ENCODE measurements at regions of chr21 and their contacts with region 1.

Region 1: DNA sequence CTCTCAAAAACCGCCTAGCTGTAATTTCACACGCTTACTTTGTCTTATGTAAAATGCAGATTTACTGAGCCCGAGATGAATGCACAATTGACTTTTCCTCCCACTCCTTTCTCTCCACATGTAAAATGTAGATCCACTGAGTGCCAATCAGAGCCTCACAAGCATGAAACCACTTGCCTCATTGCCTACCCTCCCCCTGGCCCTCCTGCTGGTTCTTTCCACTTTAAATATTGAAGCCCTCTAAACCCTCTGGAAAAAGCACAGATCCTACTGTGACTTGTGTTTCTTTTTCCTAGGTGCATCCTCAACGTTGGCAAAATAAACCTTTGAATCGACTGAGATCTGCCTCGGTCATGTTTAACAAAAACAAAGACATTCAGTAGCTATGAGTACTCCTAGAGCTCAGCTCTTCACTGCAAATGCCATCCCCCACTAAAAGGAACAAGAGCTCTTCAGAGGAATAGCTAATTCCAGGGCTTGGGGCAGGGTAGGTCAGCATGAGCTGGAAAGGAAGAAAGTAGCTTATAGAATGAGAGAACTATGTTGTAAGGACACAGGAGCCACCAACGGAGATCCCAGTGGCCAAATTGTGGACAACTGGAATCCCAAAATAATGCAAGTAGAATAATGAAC is 365.5 kb upstream of the RUNX1 start:
- DNase-seq: no peak
- ATAC-seq: no peak
- H3K4me3 ChIP-seq: no peak overlapping the region
- H3K4me3 Mint-ChIP-seq: no peak overlapping the region
- H3K27ac ChIP-seq: no peak overlapping the region
- H3K27ac Mint-ChIP-seq: no peak overlapping the region
- H3K4me1 ChIP-seq: no peaks in the 10 kb centered on the region
- H3K4me1 Mint-ChIP-seq: no peaks in the 10 kb centered on the region
- H3K27me3 ChIP-seq: no peaks in the 10 kb centered on the region
- H3K27me3 Mint-ChIP-seq: peaks cover 6% of the 10 kb centered on the region
- CTCF ChIP-seq: no peak

Region 2: DNA sequence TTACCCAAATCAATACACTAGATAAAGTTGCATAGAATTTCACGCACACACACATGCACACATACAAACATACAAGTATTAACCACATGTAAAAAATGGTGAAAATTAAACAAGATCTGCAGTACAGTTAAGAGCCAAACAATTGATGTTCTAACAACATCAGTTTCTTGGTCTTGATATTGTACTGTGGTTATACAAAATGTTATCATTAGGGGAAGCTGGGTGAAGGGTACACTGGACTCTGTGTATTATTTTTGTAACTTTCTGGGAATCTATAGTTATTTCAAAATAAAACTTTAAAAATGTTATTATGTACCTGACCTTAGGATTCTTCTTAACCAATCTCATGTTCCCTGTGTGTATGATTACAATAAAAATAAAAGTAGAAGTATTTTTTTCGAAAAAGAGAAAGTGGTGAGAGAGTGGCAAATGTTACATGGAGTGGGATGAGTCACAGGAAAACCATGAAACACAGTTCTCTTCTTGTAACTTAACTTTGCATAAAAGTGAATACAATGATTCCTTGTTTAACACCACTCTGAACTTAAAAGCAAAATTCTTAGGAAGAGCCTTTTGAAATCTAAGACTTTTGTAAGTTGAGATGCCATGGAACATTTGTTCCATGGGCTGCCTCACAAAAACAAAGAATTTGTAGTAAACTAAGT is 263.9 kb before region 1 on chr21:
- CTCF ChIA-PET with region 1: no interaction called
- POLR2A ChIA-PET with region 1: no interaction called
- intact Hi-C with region 1: no loop called
- DNase-seq: no peak
- ATAC-seq: no peak
- H3K4me3 ChIP-seq: no peak overlapping the region
- H3K4me3 Mint-ChIP-seq: no peak overlapping the region
- H3K27ac ChIP-seq: no peak overlapping the region
- H3K27ac Mint-ChIP-seq: no peak overlapping the region
- H3K4me1 ChIP-seq: peaks cover 3% of the 10 kb centered on the region
- H3K4me1 Mint-ChIP-seq: peaks cover 9% of the 10 kb centered on the region
- H3K27me3 ChIP-seq: no peaks in the 10 kb centered on the region
- H3K27me3 Mint-ChIP-seq: peaks cover 2% of the 10 kb centered on the region
- CTCF ChIP-seq: no peak

Region 3: GRCh38 chr21:35833991-35834390 is 419.4 kb after region 1 on chr21:
- CTCF ChIA-PET with region 1: no interaction called
- POLR2A ChIA-PET with region 1: no interaction called
- intact Hi-C with region 1: loop called in 1 of 2 experiments (anchors 10 kb)
- DNase-seq: no peak
- ATAC-seq: no peak
- H3K4me3 ChIP-seq: no peak overlapping the region
- H3K4me3 Mint-ChIP-seq: no peak overlapping the region
- H3K27ac ChIP-seq: no peak overlapping the region
- H3K27ac Mint-ChIP-seq: peak overlapping the region; percentile 52
- H3K4me1 ChIP-seq: peaks cover 8% of the 10 kb centered on the region
- H3K4me1 Mint-ChIP-seq: peaks cover 16% of the 10 kb centered on the region
- H3K27me3 ChIP-seq: peaks cover 0 to 4% of the 10 kb centered on the region in 2 experiments
- H3K27me3 Mint-ChIP-seq: peaks cover 6% of the 10 kb centered on the region
- CTCF ChIP-seq: no peak